ENCODE measurements at regions of chr2 and their contacts with region 1.

Region 1: DNA sequence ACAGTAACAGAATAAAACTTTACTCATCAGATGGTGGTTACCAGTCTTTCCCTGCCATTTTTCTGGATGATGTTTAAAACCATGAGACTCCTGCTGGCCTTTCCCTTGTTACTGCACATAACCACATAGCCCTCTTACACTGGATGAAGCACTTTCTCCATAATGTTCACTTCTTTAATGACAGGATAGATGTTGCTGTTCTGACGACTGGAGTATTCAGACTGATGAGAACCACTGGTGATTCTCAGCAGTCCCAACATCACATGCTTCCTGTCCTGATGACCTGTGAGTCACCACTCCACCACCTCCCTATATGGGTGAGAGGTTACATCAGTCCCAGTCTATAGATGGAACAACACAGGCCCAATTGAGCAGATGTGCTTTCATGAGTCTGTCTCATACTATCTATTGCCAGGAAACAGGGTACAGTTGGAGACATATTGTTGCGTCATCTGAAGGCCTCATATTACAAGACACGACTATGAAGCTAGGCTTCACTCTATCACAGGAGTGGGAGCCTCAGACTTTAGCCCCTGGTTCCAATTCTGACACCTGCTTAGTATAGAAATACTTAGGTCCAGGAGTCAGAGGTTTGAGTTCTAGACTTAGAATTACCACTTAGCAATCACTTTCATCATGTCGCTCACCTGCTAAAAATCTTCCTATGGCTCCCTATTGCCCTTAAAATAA is 145.7 kb upstream of the KLF7 start:
- DNase-seq: peak in 1 of 2 experiments; percentile 36
- H3K4me3 ChIP-seq: no peak overlapping the region
- H3K27ac ChIP-seq: peak overlapping the region; percentile 61
- H3K4me1 ChIP-seq: peaks cover 27% of the 10 kb centered on the region
- H3K27me3 ChIP-seq: no peaks in the 10 kb centered on the region
- CTCF ChIP-seq: no peak

Region 2: GRCh38 chr2:207324001-207324400 is 12.5 kb after region 1 on chr2:
- CTCF ChIA-PET with region 1: no interaction called
- POLR2A ChIA-PET with region 1: interaction called, 16 read pairs
- intact Hi-C with region 1: no loop called
- DNase-seq: no peak
- H3K4me3 ChIP-seq: no peak overlapping the region
- H3K27ac ChIP-seq: no peak overlapping the region
- H3K4me1 ChIP-seq: no peaks in the 10 kb centered on the region
- H3K27me3 ChIP-seq: no peaks in the 10 kb centered on the region
- CTCF ChIP-seq: no peak